OCI-LY7 (cell line): ENCODE measurements at regions of chr12 and their contacts with region 1.

Region 1: DNA sequence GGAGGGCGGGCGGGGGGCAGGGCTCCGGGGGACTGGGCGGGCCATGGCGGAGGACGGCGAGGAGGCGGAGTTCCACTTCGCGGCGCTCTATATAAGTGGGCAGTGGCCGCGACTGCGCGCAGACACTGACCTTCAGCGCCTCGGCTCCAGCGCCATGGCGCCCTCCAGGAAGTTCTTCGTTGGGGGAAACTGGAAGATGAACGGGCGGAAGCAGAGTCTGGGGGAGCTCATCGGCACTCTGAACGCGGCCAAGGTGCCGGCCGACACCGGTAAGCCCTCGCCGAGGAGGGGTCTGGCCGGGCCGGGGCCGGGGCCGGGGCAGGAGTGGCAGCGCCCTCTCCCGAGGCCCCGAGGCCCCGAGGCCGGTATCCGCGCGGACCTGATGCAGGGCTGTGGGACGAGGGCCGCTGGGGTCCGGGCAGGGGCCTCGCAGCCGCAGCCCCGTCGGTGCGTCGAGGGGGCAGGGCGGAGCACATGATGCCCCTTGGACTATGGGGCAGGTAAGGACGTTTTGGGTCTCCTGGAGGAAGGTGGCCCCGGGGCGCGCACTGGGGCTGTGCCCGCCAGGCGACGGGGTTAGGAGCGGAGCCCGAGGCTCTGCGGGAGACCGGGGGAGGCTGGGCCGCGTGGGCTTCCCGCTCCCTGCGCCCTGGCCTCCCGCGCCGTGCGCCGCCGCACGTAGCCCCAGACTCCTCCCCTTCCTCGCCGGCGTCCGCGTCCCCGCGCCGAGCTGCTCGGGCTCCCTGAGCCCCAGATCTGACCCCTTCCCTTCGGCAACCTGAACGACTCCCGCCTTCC is at the start of gene TPI1:
- DNase-seq: peak; percentile 79
- H3K4me3 ChIP-seq: peak within 1 kb of the TSS; percentile 93
- H3K27ac ChIP-seq: peak within 1 kb of the TSS; percentile 66
- H3K4me1 ChIP-seq: peaks cover 51% of the 10 kb centered on the region
- CTCF ChIP-seq: no peak
- total RNA-seq, gene TPI1: 596 and 608 TPM in 2 replicates

Region 2: GRCh38 chr12:6839482-6840201 is 28.0 kb before region 1 on chr12:
- CTCF ChIA-PET with region 1: interaction called, 7 read pairs
- POLR2A ChIA-PET with region 1: interaction called, 12 read pairs
- intact Hi-C with region 1: loop called (anchors 1 kb)
- DNase-seq: peak; percentile 97
- H3K4me3 ChIP-seq: peak overlapping the region; percentile 57
- H3K27ac ChIP-seq: peak overlapping the region; percentile 92
- H3K4me1 ChIP-seq: peaks cover 55% of the 10 kb centered on the region
- CTCF ChIP-seq: no peak

Region 3: DNA sequence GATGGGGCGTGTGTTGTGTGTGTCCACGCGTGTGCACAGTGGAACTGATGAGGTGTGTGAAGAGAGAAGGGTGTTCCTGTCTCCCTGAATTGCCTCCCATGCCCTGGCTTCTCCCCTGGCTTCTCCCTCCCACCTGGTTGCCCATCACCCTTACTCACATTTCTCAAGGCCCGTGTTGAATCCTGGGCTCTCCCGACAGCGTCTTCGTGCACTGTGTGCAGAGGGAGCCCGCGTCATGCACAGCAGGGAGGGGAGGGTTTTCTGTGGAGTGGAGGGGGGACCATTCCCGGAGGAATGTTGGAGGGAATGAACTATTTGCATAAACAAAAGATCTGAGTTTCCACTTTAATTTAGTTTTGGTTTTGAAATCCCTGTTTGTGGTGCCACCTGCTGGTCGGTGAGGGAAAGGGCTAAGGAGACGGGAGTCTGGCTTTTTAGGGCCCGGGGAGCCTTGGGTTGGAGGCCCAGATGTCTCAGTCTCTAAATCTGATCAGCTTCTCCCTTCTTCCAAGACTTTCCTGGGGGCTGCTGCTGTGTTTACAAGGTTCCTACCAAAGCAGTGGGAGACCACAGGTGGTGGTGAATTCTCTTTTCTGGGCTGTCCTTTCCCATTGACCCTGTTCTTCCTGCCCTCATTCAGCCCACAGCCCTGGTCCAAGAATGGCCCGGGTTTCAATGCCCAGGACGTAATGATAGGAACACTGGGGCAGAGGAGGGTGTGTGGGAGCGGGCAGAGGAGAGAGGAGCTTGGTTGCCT is 224.8 kb after region 1 on chr12 and contains the start of gene C1R:
- CTCF ChIA-PET with region 1: no interaction called
- POLR2A ChIA-PET with region 1: no interaction called
- intact Hi-C with region 1: loop called (anchors 5 kb)
- DNase-seq: peak; percentile 59
- H3K4me3 ChIP-seq: no peak within 1 kb of the TSS
- H3K27ac ChIP-seq: no peak within 1 kb of the TSS
- H3K4me1 ChIP-seq: peaks cover 3% of the 10 kb centered on the region
- CTCF ChIP-seq: peak; percentile 87
- total RNA-seq, gene C1R: not detected in 2 replicates